ENCODE measurements at regions of chr1 and their contacts with region 1.

Region 1: GRCh38 chr1:175124861-175125260 is 57.2 kb downstream of the TNN start:
- DNase-seq: no peak
- ATAC-seq: no peak
- H3K4me3 ChIP-seq: no peak overlapping the region
- H3K4me3 Mint-ChIP-seq: no peak overlapping the region
- H3K27ac ChIP-seq: no peak overlapping the region
- H3K27ac Mint-ChIP-seq: no peak overlapping the region
- H3K4me1 ChIP-seq: no peaks in the 10 kb centered on the region
- H3K4me1 Mint-ChIP-seq: no peaks in the 10 kb centered on the region
- H3K27me3 ChIP-seq: no peaks in the 10 kb centered on the region
- H3K27me3 Mint-ChIP-seq: peaks cover 6% of the 10 kb centered on the region
- CTCF ChIP-seq: no peak

Region 2: GRCh38 chr1:174769961-174770549 is 354.8 kb before region 1 on chr1:
- CTCF ChIA-PET with region 1: interaction called, 3 read pairs
- POLR2A ChIA-PET with region 1: no interaction called
- intact Hi-C with region 1: loop called (anchors 1 kb)
- DNase-seq: peak in 2 of 9 experiments; percentile 64 to 75
- ATAC-seq: peak; percentile 65
- H3K4me3 ChIP-seq: no peak overlapping the region
- H3K4me3 Mint-ChIP-seq: no peak overlapping the region
- H3K27ac ChIP-seq: no peak overlapping the region
- H3K27ac Mint-ChIP-seq: no peak overlapping the region
- H3K4me1 ChIP-seq: no peaks in the 10 kb centered on the region
- H3K4me1 Mint-ChIP-seq: peaks cover 3% of the 10 kb centered on the region
- H3K27me3 ChIP-seq: no peaks in the 10 kb centered on the region
- H3K27me3 Mint-ChIP-seq: no peaks in the 10 kb centered on the region
- CTCF ChIP-seq: peak; percentile 78

Region 3: DNA sequence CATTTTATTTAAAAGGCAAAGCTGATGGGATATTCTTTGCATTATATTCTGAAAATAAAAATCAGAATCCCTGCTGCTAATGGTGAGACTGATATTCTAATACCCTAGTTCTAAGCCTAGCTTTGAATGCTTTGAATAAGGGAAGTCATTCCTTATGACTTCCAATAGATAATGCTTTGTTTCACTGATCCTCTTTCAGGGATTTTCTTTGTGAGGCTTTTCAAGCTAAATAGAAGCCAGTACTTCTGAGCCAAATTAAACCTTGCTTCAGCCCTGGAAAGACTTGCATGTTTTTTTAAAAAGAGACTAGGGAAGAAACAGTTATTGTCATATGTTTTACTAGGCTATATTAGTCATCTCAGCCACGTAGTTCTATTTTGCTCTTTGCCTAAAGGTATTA is 193.6 kb before region 1 on chr1:
- CTCF ChIA-PET with region 1: no interaction called
- POLR2A ChIA-PET with region 1: no interaction called
- intact Hi-C with region 1: no loop called
- DNase-seq: no peak
- ATAC-seq: no peak
- H3K4me3 ChIP-seq: no peak overlapping the region
- H3K4me3 Mint-ChIP-seq: no peak overlapping the region
- H3K27ac ChIP-seq: no peak overlapping the region
- H3K27ac Mint-ChIP-seq: no peak overlapping the region
- H3K4me1 ChIP-seq: no peaks in the 10 kb centered on the region
- H3K4me1 Mint-ChIP-seq: peaks cover 3% of the 10 kb centered on the region
- H3K27me3 ChIP-seq: no peaks in the 10 kb centered on the region
- H3K27me3 Mint-ChIP-seq: no peaks in the 10 kb centered on the region
- CTCF ChIP-seq: no peak

Region 4: GRCh38 chr1:175035865-175036264 is 89.0 kb before region 1 on chr1:
- CTCF ChIA-PET with region 1: interaction called, 22 read pairs
- POLR2A ChIA-PET with region 1: no interaction called
- intact Hi-C with region 1: no loop called
- DNase-seq: no peak
- ATAC-seq: no peak
- H3K4me3 ChIP-seq: no peak overlapping the region
- H3K4me3 Mint-ChIP-seq: no peak overlapping the region
- H3K27ac ChIP-seq: no peak overlapping the region
- H3K27ac Mint-ChIP-seq: no peak overlapping the region
- H3K4me1 ChIP-seq: no peaks in the 10 kb centered on the region
- H3K4me1 Mint-ChIP-seq: no peaks in the 10 kb centered on the region
- H3K27me3 ChIP-seq: no peaks in the 10 kb centered on the region
- H3K27me3 Mint-ChIP-seq: no peaks in the 10 kb centered on the region
- CTCF ChIP-seq: no peak